Prostate gland (tissue), 2 donors: ENCODE measurements at regions of chr2 and their contacts with region 1.

Region 1: GRCh38 chr2:216412022-216412999 is at the start of gene SMARCAL1:
- DNase-seq: peak; percentile 98
- H3K4me3 ChIP-seq: peak within 1 kb of the TSS; percentile 52 to 65
- H3K27ac ChIP-seq: peak within 1 kb of the TSS; percentile 94 to 95
- H3K4me1 ChIP-seq: no peaks in the 10 kb centered on the region
- H3K27me3 ChIP-seq: no peaks in the 10 kb centered on the region
- CTCF ChIP-seq: peak in 1 of 4 experiments; percentile 26
- POLR2A ChIP-seq: peak; percentile 29
- total RNA-seq, gene SMARCAL1: 15.3 to 32.2 TPM

Region 2: GRCh38 chr2:216114714-216115557 is 297.4 kb before region 1 on chr2:
- intact Hi-C with region 1: loop called (anchors 10 kb)
- DNase-seq: peak; percentile 98
- H3K4me3 ChIP-seq: peak overlapping the region; percentile 30 to 45
- H3K27ac ChIP-seq: peak overlapping the region; percentile 83 to 88
- H3K4me1 ChIP-seq: peaks cover 5% of the 10 kb centered on the region
- H3K27me3 ChIP-seq: no peaks in the 10 kb centered on the region
- CTCF ChIP-seq: peak; percentile 58 to 98 (median 97)
- POLR2A ChIP-seq: peak; percentile 58